Cardiac septum (tissue), 1 donor: ENCODE measurements at regions of chr9 and their contacts with region 1.

Region 1: DNA sequence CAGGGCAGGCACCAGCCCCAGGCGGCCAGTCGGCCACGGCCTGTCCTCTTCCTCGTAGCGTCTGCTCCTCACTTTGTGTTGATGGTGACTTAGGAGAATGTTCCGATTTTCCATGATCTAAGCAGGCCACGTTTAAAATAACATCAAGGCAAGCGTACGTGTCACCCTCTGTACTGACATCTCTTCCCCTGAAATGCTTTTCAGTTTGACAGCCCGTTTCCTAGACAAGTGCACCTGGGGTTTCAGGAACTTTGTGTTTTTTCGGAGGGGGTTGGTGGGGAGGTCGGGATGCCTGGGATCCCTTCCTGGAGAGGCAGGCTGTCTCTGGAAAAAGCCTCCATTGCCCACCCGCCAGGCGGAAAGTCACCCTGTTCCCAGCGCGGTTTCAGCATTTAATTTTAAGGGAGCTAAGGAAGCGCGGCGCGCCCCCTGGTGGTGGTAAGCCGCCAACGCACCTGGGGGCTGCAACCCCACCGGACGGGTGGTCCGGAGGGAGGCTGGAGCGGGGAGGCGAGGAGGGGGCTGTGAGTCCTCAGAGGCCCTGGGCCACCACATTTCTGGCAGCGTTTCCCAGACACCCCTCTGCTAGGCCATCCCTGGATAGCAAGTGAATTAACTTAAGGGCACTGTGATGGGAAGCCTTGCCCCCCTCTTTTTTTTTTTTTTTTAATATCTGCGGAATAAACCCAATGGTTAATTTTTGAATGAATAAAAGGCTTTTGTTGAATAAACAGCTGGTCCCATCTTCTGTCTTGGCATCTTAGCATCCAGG is 29.5 kb upstream of the HMCN2 start:
- DNase-seq: no peak

Region 2: GRCh38 chr9:129884220-129885017 is 351.7 kb before region 1 on chr9:
- intact Hi-C with region 1: loop called (anchors 5 kb)
- DNase-seq: peak; percentile 95

Region 3: GRCh38 chr9:130107234-130107861 is 128.7 kb before region 1 on chr9:
- intact Hi-C with region 1: loop called (anchors 1 kb)
- DNase-seq: peak; percentile 83

Region 4: DNA sequence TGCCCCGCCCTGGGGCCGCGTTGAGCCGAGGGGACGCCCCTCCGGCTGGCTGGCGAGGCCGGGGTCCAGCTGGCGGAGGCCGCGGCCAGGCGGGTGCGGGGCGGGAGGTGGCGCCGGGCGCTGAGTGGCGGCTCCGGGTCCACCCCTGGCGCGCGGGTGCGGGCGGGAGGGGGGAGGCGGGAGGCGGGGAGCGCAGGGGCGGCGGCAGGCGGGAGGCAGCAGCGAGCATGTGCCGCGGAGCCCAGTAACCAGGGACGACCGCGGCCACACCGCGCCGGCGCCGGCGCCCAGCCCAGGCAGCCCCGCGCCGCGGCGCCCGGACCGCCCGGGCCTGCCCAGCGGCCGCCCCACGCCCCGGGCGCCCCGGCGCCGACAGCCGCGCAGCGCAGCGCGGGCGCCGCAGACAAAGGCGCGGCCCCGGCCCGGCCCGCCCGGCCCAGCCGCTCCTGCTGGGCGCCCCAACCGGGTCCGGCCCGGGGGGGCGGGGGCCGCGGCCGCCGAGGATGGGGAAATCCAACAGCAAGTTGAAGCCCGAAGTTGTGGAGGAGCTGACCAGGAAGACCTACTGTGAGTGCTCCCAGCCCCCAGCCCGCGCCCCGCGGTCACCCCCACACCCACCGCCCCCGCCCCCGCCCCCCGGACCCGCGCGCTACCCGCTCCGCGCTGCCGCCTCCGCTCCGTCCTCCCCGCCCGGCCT is 63.8 kb before region 1 on chr9 and contains the start of gene NCS1:
- intact Hi-C with region 1: loop called (anchors 5 kb)
- DNase-seq: peak; percentile 86
- total RNA-seq, gene NCS1: 14.3 TPM

Region 5: GRCh38 chr9:130193531-130194377 is 42.3 kb before region 1 on chr9:
- intact Hi-C with region 1: no loop called
- DNase-seq: no peak